Naive thymus-derived CD4-positive, alpha-beta T cell (primary cell): ENCODE measurements at regions of chr3 and their contacts with region 1.

Region 1: DNA sequence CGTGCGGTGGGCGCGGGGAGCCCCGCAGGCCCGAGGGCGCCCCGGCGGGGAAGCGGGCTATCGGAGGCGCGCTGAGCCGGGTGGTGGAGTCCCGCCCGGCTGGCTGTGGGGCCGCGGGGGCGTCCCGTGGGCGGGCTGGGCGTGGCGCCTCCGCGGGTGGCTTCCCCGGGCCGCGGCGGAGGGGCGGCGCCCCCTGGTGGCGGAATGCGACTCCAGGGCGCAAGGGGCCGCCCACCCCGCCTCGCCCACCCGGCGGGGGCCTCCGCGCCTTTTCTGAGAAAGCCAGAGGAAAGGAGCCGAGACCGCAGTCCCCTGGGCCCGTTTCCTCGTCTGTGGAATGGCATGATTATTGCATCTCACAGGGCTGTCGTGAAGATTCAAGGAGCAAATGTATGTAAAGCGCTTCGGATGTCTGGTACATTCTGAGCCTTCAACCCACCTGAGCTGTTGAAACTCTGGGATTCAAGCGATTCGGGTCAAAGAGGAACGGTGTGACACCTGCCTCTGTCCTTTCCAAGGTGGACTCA is 31.9 kb upstream of the RAB6B start:
- DNase-seq: peak; percentile 64 to 88 (median 81)
- ATAC-seq: peak; percentile 97
- H3K4me3 ChIP-seq: peak overlapping the region; percentile 51
- H3K4me3 Mint-ChIP-seq: peak overlapping the region; percentile 58 to 85 (median 74)
- H3K27ac ChIP-seq: peak overlapping the region; percentile 43
- H3K27ac Mint-ChIP-seq: peak overlapping the region in 2 of 9 donors; percentile 56 to 69
- H3K4me1 ChIP-seq: peaks cover 0 to 4% of the 10 kb centered on the region in 2 donors
- H3K4me1 Mint-ChIP-seq: peaks cover 4 to 14% (median 5%) of the 10 kb centered on the region in 7 donors
- H3K27me3 ChIP-seq: peaks cover 0 to 3% of the 10 kb centered on the region in 2 donors
- H3K27me3 Mint-ChIP-seq: peaks cover 5 to 26% (median 10%) of the 10 kb centered on the region in 5 donors

Region 2: DNA sequence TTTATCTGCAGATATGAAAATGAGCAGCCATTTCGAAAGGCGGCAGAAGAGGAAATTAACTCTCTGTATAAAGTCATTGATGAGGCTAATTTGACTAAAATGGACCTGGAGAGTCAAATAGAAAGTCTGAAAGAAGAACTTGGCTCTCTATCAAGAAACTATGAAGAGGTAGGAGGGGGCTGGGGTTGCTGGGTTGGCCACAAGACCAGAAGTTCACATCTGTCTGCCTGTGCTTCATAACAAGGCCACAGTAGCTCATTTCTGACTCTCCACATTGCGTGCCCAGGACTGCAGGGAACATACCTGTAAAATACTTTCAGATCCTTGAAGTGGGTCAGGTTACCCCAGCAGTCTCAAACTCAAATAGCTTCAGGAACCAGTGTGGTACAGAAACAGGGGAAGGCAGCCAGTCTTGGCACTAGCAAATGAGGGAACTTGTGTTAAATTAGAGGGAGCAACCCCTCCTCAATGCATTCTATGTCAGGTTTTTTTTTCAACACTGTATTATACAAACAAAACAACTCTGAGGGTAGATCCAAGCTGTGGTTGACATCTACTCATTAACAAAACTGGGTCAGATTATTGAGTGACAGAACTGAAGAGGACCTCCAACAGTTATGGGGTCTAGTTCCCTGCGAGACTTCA is 479.0 kb before region 1 on chr3:
- CTCF ChIA-PET with region 1: no interaction called
- POLR2A ChIA-PET with region 1: no interaction called
- intact Hi-C with region 1: loop called in 1 of 2 experiments (anchors 10 kb)
- DNase-seq: peak in 1 of 9 donors; percentile 41
- ATAC-seq: peak; percentile 76
- H3K4me3 ChIP-seq: no peak overlapping the region
- H3K4me3 Mint-ChIP-seq: peak overlapping the region in 3 of 10 donors; percentile 31 to 54 (median 36)
- H3K27ac ChIP-seq: no peak overlapping the region
- H3K27ac Mint-ChIP-seq: peak overlapping the region in 8 of 9 donors; percentile 14 to 87 (median 70)
- H3K4me1 ChIP-seq: peaks cover 5 to 14% of the 10 kb centered on the region in 2 donors
- H3K4me1 Mint-ChIP-seq: peaks cover 7 to 26% (median 15%) of the 10 kb centered on the region in 7 donors
- H3K27me3 ChIP-seq: no peaks in the 10 kb centered on the region
- H3K27me3 Mint-ChIP-seq: no peaks in the 10 kb centered on the region

Region 3: DNA sequence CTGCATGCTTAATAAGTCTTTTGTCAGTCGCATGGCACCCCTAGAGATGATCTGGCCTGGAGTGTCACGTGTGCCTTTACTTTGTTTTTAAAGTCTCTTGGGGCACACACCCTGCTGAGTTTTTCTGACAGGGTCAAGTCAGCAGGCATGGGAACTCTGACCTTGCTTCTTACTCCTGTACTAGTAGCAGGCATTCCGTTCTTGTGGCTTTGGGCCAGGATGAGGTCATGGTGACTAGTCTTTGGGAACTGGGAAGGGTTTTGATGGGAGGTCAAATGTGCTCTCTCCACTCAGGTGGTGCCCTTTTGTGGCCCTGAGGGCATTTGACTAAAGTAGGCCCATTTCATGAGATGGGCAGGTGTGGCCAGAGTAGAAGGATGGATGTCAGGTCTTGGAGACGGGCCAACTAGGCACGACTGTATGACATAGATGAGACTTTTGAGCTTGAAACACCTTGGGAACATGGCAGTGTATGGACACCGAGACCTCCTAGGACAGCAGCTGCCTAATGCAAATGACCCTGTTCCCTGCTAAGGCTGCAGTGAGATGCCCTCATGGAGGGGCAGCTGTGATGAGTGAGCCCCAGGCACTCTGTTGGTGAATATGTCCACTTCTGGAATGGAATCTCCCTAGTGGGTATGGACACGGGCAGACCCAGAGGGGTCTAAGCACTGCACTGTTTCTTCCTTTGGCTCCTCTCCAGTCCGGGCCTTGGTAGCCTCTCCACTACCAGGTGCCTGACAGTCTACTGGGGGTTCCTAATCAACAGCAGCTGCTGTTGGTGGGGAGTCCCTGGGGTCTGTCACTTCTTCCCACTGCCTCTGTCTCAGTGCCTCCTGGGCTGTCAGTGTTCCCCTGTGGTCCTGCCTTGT is 105.6 kb before region 1 on chr3:
- CTCF ChIA-PET with region 1: interaction called, 3 read pairs
- POLR2A ChIA-PET with region 1: no interaction called
- intact Hi-C with region 1: loop called (anchors 1 to 2 kb)
- DNase-seq: no peak
- ATAC-seq: no peak
- H3K4me3 ChIP-seq: no peak overlapping the region
- H3K4me3 Mint-ChIP-seq: no peak overlapping the region
- H3K27ac ChIP-seq: no peak overlapping the region
- H3K27ac Mint-ChIP-seq: peak overlapping the region in 2 of 9 donors; percentile 10 to 23
- H3K4me1 ChIP-seq: no peaks in the 10 kb centered on the region
- H3K4me1 Mint-ChIP-seq: peaks cover 0 to 6% (median 3%) of the 10 kb centered on the region in 7 donors
- H3K27me3 ChIP-seq: no peaks in the 10 kb centered on the region
- H3K27me3 Mint-ChIP-seq: no peaks in the 10 kb centered on the region